ENCODE measurements at regions of chr13 and their contacts with region 1.

Region 1: DNA sequence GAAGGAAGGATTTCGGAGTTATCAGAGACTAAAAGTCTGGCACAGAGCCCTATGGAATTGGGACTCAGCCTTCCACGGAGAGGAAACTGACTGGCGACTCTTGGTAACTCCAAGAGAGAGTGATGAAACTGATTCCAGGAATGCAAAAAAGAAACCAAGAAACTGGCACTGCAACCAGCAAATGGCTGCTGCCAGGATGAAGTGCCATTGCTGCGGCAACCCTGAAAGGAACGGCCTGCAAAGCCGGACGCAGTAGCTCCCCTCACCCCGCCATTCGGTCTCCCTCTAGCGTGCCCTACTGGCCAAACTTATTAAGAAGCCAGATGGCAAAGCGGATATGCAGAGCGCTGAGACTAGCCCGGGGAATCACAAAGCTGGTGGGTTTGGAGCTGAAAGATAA is 236.0 kb downstream of the PCDH9 start:
- DNase-seq: no peak
- ATAC-seq: no peak
- H3K4me3 ChIP-seq: no peak overlapping the region
- H3K27ac ChIP-seq: no peak overlapping the region
- H3K4me1 ChIP-seq: no peaks in the 10 kb centered on the region
- H3K27me3 ChIP-seq: no peaks in the 10 kb centered on the region
- CTCF ChIP-seq: no peak
- EP300 ChIP-seq: no peak
- POLR2A ChIP-seq: no peak
- RAD21 ChIP-seq: 0 out of 2 replicates have a peak, but pooled peaks have one; percentile 17

Region 2: GRCh38 chr13:66967811-66968597 is 26.1 kb before region 1 on chr13:
- CTCF ChIA-PET with region 1: interaction called, 8 read pairs
- POLR2A ChIA-PET with region 1: no interaction called
- RAD21 ChIA-PET with region 1: no interaction called
- SMC1A ChIA-PET with region 1: interaction called, 14 read pairs
- in situ Hi-C with region 1: no loop called
- intact Hi-C with region 1: no loop called
- DNase-seq: no peak
- ATAC-seq: no peak
- H3K4me3 ChIP-seq: no peak overlapping the region
- H3K27ac ChIP-seq: no peak overlapping the region
- H3K4me1 ChIP-seq: no peaks in the 10 kb centered on the region
- H3K27me3 ChIP-seq: no peaks in the 10 kb centered on the region
- CTCF ChIP-seq: no peak
- EP300 ChIP-seq: no peak
- POLR2A ChIP-seq: no peak
- RAD21 ChIP-seq: no peak

Region 3: DNA sequence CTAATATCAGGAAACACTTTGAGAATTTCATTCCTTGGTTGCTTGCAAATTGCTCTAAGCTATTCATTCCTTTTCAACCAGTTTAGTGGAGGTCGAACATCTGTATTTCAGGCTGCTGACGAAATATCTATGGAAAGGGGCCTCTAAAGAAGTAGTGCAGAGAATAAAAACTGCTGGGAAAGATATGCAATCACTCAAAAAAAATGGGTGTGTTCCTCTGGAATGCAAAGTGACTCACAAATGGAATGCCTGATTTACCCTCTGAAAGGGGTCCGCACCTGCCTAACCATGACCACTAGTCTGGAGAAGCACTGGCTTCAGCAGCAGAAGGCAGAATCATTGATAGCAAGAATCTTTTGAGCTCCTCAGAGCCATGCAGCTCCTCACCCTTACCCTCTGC is 106.6 kb after region 1 on chr13:
- CTCF ChIA-PET with region 1: no interaction called
- POLR2A ChIA-PET with region 1: no interaction called
- RAD21 ChIA-PET with region 1: no interaction called
- SMC1A ChIA-PET with region 1: no interaction called
- in situ Hi-C with region 1: no loop called
- intact Hi-C with region 1: no loop called
- DNase-seq: no peak
- ATAC-seq: no peak
- H3K4me3 ChIP-seq: no peak overlapping the region
- H3K27ac ChIP-seq: no peak overlapping the region
- H3K4me1 ChIP-seq: no peaks in the 10 kb centered on the region
- H3K27me3 ChIP-seq: no peaks in the 10 kb centered on the region
- CTCF ChIP-seq: no peak
- EP300 ChIP-seq: no peak
- POLR2A ChIP-seq: no peak
- RAD21 ChIP-seq: no peak

Region 4: GRCh38 chr13:67355812-67356476 is 361.8 kb after region 1 on chr13:
- CTCF ChIA-PET with region 1: no interaction called
- POLR2A ChIA-PET with region 1: no interaction called
- RAD21 ChIA-PET with region 1: no interaction called
- SMC1A ChIA-PET with region 1: no interaction called
- in situ Hi-C with region 1: no loop called
- intact Hi-C with region 1: no loop called
- DNase-seq: no peak
- ATAC-seq: no peak
- H3K4me3 ChIP-seq: no peak overlapping the region
- H3K27ac ChIP-seq: no peak overlapping the region
- H3K4me1 ChIP-seq: no peaks in the 10 kb centered on the region
- H3K27me3 ChIP-seq: no peaks in the 10 kb centered on the region
- CTCF ChIP-seq: no peak
- EP300 ChIP-seq: no peak
- POLR2A ChIP-seq: no peak
- RAD21 ChIP-seq: no peak

Measured in GM12878 (cell line).